Caco-2 (cell line): ENCODE measurements at regions of chr1 and their contacts with region 1.

Region 1: GRCh38 chr1:213572912-213573647 is 414.7 kb upstream of the PROX1 start:
- DNase-seq: peak; percentile 71 to 73
- H3K4me3 ChIP-seq: no peak overlapping the region
- H3K4me3 Mint-ChIP-seq: peak overlapping the region; percentile 27
- H3K27ac Mint-ChIP-seq: peak overlapping the region; percentile 85
- H3K4me1 ChIP-seq: peaks cover 59% of the 10 kb centered on the region
- H3K4me1 Mint-ChIP-seq: peaks cover 64% of the 10 kb centered on the region
- H3K27me3 ChIP-seq: no peaks in the 10 kb centered on the region
- H3K27me3 Mint-ChIP-seq: no peaks in the 10 kb centered on the region
- CTCF ChIP-seq: no peak

Region 2: GRCh38 chr1:213122514-213122929 is 450.6 kb before region 1 on chr1:
- CTCF ChIA-PET with region 1: no interaction called
- POLR2A ChIA-PET with region 1: no interaction called
- intact Hi-C with region 1: loop called (anchors 5 kb)
- DNase-seq: peak in 1 of 2 experiments; percentile 39
- H3K4me3 ChIP-seq: no peak overlapping the region
- H3K4me3 Mint-ChIP-seq: no peak overlapping the region
- H3K27ac Mint-ChIP-seq: peak overlapping the region; percentile 65
- H3K4me1 ChIP-seq: peaks cover 22% of the 10 kb centered on the region
- H3K4me1 Mint-ChIP-seq: peaks cover 27% of the 10 kb centered on the region
- H3K27me3 ChIP-seq: no peaks in the 10 kb centered on the region
- H3K27me3 Mint-ChIP-seq: no peaks in the 10 kb centered on the region
- CTCF ChIP-seq: peak in 1 of 2 experiments; percentile 36

Region 3: GRCh38 chr1:213619026-213619425 is 45.9 kb after region 1 on chr1:
- CTCF ChIA-PET with region 1: no interaction called
- POLR2A ChIA-PET with region 1: no interaction called
- intact Hi-C with region 1: loop called (anchors 2 kb)
- DNase-seq: peak in 1 of 2 experiments; percentile 46
- H3K4me3 ChIP-seq: no peak overlapping the region
- H3K4me3 Mint-ChIP-seq: no peak overlapping the region
- H3K27ac Mint-ChIP-seq: peak overlapping the region; percentile 74
- H3K4me1 ChIP-seq: peaks cover 57% of the 10 kb centered on the region
- H3K4me1 Mint-ChIP-seq: peaks cover 50% of the 10 kb centered on the region
- H3K27me3 ChIP-seq: no peaks in the 10 kb centered on the region
- H3K27me3 Mint-ChIP-seq: no peaks in the 10 kb centered on the region
- CTCF ChIP-seq: no peak

Region 4: DNA sequence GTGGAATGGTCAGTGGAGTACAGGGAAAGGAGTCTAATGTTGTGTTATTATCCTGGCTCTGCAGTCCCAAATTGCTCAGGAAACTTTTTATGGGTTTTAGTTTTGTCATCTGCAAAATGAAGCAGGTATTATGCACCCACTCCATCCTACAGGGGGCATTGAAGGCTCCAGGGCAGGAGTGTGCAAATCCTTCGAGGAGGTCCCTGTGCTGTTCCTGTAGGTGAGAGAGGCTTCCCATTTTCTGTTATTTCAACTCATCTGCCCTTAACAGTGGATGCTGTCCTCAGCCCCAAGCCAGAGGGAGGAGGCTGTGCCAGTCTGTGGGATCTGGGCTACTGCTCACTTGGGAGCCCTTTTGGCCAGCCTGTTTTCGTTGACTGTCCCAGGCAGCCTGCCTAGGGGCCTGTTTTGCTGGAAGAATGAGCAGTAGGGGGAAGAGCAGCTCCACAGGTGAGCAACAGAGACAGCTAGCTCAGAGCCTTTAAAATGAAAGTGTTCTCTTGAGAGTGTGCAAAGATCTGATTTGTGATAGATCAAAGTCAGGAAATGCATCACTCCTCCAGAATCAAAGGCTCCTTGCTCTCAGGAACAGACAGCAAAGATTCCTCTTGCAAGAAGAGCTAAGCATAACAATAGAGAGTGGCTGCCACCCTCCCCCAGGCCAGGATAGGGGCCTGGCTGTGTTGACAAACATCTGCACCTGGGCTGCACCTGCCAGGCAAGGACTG is 97.0 kb after region 1 on chr1:
- CTCF ChIA-PET with region 1: no interaction called
- POLR2A ChIA-PET with region 1: no interaction called
- intact Hi-C with region 1: loop called (anchors 2 kb)
- DNase-seq: peak; percentile 56 to 67
- H3K4me3 ChIP-seq: no peak overlapping the region
- H3K4me3 Mint-ChIP-seq: no peak overlapping the region
- H3K27ac Mint-ChIP-seq: no peak overlapping the region
- H3K4me1 ChIP-seq: peaks cover 11% of the 10 kb centered on the region
- H3K4me1 Mint-ChIP-seq: peaks cover 12% of the 10 kb centered on the region
- H3K27me3 ChIP-seq: no peaks in the 10 kb centered on the region
- H3K27me3 Mint-ChIP-seq: no peaks in the 10 kb centered on the region
- CTCF ChIP-seq: peak; percentile 9 to 21

Region 5: DNA sequence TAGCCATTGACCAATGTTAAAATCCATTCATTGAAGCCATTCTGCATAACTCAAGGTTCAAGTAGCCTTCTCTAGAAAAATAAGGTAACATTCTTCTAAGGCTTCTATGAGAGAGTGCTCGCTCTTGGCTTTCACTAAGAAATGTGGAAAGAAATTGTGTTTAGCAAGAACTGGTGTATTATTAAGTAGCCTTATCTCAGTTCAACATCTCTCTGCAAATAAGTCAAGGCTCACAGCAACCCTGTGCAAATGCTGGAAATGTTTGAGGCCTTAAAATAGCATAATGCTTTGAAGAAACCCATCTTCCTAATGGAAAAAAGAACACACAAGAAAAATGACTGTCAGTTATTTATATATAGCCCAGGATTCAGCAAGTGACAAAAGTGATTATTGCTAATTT is 160.6 kb after region 1 on chr1:
- CTCF ChIA-PET with region 1: no interaction called
- POLR2A ChIA-PET with region 1: no interaction called
- intact Hi-C with region 1: loop called (anchors 5 kb)
- DNase-seq: peak in 1 of 2 experiments; percentile 38
- H3K4me3 ChIP-seq: no peak overlapping the region
- H3K4me3 Mint-ChIP-seq: no peak overlapping the region
- H3K27ac Mint-ChIP-seq: no peak overlapping the region
- H3K4me1 ChIP-seq: peaks cover 21% of the 10 kb centered on the region
- H3K4me1 Mint-ChIP-seq: no peaks in the 10 kb centered on the region
- H3K27me3 ChIP-seq: no peaks in the 10 kb centered on the region
- H3K27me3 Mint-ChIP-seq: no peaks in the 10 kb centered on the region
- CTCF ChIP-seq: no peak